ENCODE measurements at regions of chr3 and their contacts with region 1.

Region 1: GRCh38 chr3:172270557-172271166 is 177.6 kb downstream of the GHSR start:
- DNase-seq: no peak
- ATAC-seq: no peak
- H3K4me3 ChIP-seq: no peak overlapping the region
- H3K4me3 Mint-ChIP-seq: no peak overlapping the region
- H3K27ac ChIP-seq: no peak overlapping the region
- H3K27ac Mint-ChIP-seq: no peak overlapping the region
- H3K4me1 ChIP-seq: no peaks in the 10 kb centered on the region
- H3K4me1 Mint-ChIP-seq: no peaks in the 10 kb centered on the region
- H3K27me3 ChIP-seq: no peaks in the 10 kb centered on the region
- H3K27me3 Mint-ChIP-seq: no peaks in the 10 kb centered on the region
- CTCF ChIP-seq: no peak

Region 2: GRCh38 chr3:172039436-172040077 is 231.1 kb before region 1 on chr3 and contains the start of gene FNDC3B:
- CTCF ChIA-PET with region 1: no interaction called
- POLR2A ChIA-PET with region 1: no interaction called
- intact Hi-C with region 1: loop called (anchors 5 to 10 kb)
- DNase-seq: peak; percentile 81 to 96 (median 88)
- ATAC-seq: peak; percentile 93
- H3K4me3 ChIP-seq: peak within 1 kb of the TSS; percentile 91
- H3K4me3 Mint-ChIP-seq: peak within 1 kb of the TSS; percentile 100
- H3K27ac ChIP-seq: peak within 1 kb of the TSS; percentile 71 to 86
- H3K27ac Mint-ChIP-seq: peak within 1 kb of the TSS; percentile 92
- H3K4me1 ChIP-seq: peaks cover 25% of the 10 kb centered on the region
- H3K4me1 Mint-ChIP-seq: peaks cover 53% of the 10 kb centered on the region
- H3K27me3 ChIP-seq: no peaks in the 10 kb centered on the region
- H3K27me3 Mint-ChIP-seq: peaks cover 5% of the 10 kb centered on the region
- CTCF ChIP-seq: no peak
- total RNA-seq, gene FNDC3B: 26.1 to 28.7 TPM

Measured in CD4-positive, alpha-beta T cell (primary cell).